ENCODE measurements at regions of chr11 and their contacts with region 1.

Region 1: GRCh38 chr11:2420502-2421225 is 20.1 kb downstream of the TSSC4 start:
- DNase-seq: peak; percentile 59
- ATAC-seq: peak; percentile 97
- H3K4me3 ChIP-seq: no peak overlapping the region
- H3K27ac ChIP-seq: no peak overlapping the region
- H3K4me1 ChIP-seq: no peaks in the 10 kb centered on the region
- H3K27me3 ChIP-seq: peaks cover 9% of the 10 kb centered on the region; the same call in 1 of the 2 replicates
- CTCF ChIP-seq: peak; percentile 97
- POLR2A ChIP-seq: no peak
- RAD21 ChIP-seq: peak; percentile 96

Region 2: DNA sequence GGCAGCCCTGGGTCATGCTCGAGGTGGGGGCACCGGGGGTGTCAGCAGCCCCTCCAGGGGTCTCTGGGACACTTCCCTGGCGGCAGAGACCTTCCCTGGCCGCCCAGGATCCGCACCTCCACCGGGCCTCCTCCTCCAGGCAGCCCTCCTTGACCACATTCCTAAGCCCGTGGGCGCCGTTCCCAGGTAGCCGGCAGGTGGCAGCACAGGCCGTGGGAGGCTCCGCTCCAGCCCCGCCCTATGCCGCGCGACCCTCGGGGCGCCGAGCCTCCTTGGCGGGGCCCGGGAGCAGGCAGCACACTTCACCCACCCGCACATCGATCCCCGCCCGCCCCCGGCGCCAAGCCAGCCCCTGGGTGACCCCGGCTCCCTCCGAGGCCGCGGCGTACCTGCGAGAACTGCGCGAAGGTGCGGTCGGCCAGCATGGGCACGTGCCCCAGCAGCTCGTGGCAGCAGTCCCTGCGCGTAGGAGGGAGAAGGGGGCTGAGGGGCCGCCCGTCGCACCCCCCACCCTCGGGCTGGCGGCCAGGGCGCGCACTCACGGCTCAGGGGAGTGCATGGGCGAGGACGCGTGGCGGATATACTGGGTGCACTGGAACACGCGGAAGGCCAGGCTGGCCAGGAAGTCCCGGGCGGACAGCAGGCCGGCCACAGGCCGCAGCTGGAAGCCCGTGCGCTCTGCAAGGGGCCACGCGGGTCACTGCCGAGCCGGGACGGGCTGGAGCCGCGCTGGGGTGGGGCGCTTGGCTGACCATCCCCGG is 254.4 kb before region 1 on chr11:
- CTCF ChIA-PET with region 1: no interaction called
- POLR2A ChIA-PET with region 1: interaction called, 7 read pairs
- dilution Hi-C with region 1: no loop called
- in situ Hi-C with region 1: no loop called
- intact Hi-C with region 1: loop called (anchors 1 kb)
- DNase-seq: no peak
- ATAC-seq: peak; percentile 55
- H3K4me3 ChIP-seq: no peak overlapping the region
- H3K27ac ChIP-seq: no peak overlapping the region
- H3K4me1 ChIP-seq: no peaks in the 10 kb centered on the region
- H3K27me3 ChIP-seq: peaks cover 14% of the 10 kb centered on the region; the same call in 1 of the 2 replicates
- CTCF ChIP-seq: peak; percentile 47
- POLR2A ChIP-seq: no peak
- RAD21 ChIP-seq: peak; percentile 48

Region 3: DNA sequence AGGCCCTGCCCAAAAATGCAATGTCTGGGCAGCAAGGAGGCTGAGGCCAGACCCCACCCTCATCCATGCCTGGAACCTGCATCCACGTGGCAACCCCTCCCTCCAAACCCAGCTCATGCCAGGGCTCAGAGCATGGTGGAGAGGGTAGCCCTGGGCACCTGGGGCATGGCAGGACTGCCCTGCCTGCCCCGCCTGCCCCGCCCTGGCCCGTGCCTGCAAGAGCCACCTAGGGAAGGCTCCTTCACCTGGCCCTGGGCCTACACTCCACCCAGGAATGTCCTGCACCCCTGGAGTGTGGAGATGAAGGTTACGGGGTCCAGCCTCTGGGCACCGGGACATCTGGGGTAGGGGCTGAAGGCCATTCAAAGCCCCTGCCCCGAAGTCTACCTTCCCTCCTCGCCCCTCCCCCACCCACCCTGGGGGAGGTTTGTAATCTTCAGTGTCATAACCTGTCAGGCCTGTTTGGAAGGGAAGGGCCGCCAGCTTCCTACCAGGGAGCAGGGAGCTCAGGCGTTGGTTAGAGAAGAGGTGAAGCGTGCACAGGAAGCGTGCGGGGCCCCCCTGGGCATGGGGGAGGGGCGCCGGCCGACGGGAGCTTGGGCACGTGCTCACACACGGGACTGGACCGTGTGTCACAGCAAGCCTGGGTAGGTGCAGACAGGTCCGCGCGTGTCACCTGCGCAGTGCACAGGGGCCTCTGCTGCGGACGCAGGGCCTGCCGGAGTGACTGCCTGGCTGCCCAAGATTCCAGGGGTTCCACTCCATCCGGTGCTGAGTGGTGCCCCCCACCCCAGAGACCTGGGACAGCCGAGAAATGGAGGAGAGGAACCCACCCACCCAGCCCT is 218.4 kb before region 1 on chr11:
- CTCF ChIA-PET with region 1: no interaction called
- POLR2A ChIA-PET with region 1: no interaction called
- dilution Hi-C with region 1: no loop called
- in situ Hi-C with region 1: loop called (anchors 5 kb)
- intact Hi-C with region 1: loop called (anchors 1 kb)
- DNase-seq: no peak
- ATAC-seq: no peak
- H3K4me3 ChIP-seq: no peak overlapping the region
- H3K27ac ChIP-seq: no peak overlapping the region
- H3K4me1 ChIP-seq: no peaks in the 10 kb centered on the region
- H3K27me3 ChIP-seq: peaks cover 13% of the 10 kb centered on the region
- CTCF ChIP-seq: no peak
- POLR2A ChIP-seq: no peak
- RAD21 ChIP-seq: no peak

Region 4: GRCh38 chr11:2314525-2315394 is 105.9 kb before region 1 on chr11:
- CTCF ChIA-PET with region 1: no interaction called
- POLR2A ChIA-PET with region 1: no interaction called
- dilution Hi-C with region 1: no loop called
- in situ Hi-C with region 1: loop called (anchors 5 kb)
- intact Hi-C with region 1: no loop called
- DNase-seq: peak; percentile 60
- ATAC-seq: peak; percentile 82
- H3K4me3 ChIP-seq: no peak overlapping the region
- H3K27ac ChIP-seq: peak overlapping the region; percentile 53; the same call in 1 of the 2 replicates
- H3K4me1 ChIP-seq: peaks cover 20% of the 10 kb centered on the region
- H3K27me3 ChIP-seq: peaks cover 3% of the 10 kb centered on the region; the same call in 1 of the 2 replicates
- CTCF ChIP-seq: no peak
- POLR2A ChIP-seq: no peak
- RAD21 ChIP-seq: no peak

Region 5: DNA sequence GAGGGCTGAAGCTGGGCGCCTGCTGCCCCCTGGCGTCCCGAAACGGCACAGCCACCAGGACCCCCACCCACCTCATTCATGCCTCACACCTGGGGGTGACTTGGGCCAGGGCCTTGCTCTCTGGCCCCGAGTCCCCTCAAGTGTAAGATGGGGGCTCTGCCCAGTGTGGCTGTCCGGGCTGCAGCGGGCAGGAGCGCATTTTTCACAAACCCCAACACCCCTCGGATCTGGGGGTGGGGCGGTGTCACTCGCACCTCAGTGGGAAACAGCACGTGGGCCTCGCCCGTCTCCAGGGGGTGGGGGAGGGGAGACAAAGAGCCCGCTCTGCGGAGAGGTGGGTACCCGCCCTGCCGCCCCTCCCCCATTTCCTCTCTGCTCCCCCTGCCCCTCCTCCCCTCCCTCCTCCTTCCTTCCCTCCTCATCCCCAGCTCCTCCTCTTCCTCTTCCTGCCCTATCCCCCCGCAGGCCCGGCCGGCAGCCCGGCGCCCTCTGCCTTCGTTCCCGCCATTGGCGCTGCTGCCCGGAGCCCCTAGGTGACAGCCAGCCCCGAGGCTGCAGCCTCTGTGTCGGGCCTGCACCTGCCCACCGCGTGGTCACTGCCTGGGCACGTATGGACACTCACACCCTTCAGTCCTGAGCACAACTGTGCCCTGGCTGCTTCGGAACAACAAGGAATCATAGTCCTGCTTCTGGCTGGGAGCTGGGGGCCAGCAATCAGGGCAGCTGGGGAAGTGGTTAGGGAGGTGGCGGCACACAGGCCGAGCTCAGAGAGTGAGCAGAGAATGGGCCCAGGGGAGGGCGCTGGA is 471.8 kb after region 1 on chr11:
- CTCF ChIA-PET with region 1: no interaction called
- POLR2A ChIA-PET with region 1: no interaction called
- dilution Hi-C with region 1: no loop called
- in situ Hi-C with region 1: loop called (anchors 10 kb)
- intact Hi-C with region 1: no loop called
- DNase-seq: peak; percentile 50
- ATAC-seq: peak; percentile 79
- H3K4me3 ChIP-seq: peak overlapping the region; percentile 44
- H3K27ac ChIP-seq: peak overlapping the region; percentile 89
- H3K4me1 ChIP-seq: peaks cover 26% of the 10 kb centered on the region
- H3K27me3 ChIP-seq: no peaks in the 10 kb centered on the region
- CTCF ChIP-seq: peak; percentile 80
- POLR2A ChIP-seq: 0 out of 2 replicates have a peak, but pooled peaks have one; percentile 35
- RAD21 ChIP-seq: peak; percentile 82